Activated CD4-positive, alpha-beta memory T cell treated with anti-CD3 and anti-CD28 coated beads for 36 hours (primary cell): ENCODE measurements at regions of chr6 and their contacts with region 1.

Region 1: GRCh38 chr6:70118670-70119069 is 184.2 kb downstream of the COL9A1 start:
- DNase-seq: no peak
- H3K4me3 Mint-ChIP-seq: no peak overlapping the region
- H3K27ac Mint-ChIP-seq: no peak overlapping the region
- H3K4me1 Mint-ChIP-seq: no peaks in the 10 kb centered on the region
- H3K27me3 Mint-ChIP-seq: peaks cover 9% of the 10 kb centered on the region

Region 2: DNA sequence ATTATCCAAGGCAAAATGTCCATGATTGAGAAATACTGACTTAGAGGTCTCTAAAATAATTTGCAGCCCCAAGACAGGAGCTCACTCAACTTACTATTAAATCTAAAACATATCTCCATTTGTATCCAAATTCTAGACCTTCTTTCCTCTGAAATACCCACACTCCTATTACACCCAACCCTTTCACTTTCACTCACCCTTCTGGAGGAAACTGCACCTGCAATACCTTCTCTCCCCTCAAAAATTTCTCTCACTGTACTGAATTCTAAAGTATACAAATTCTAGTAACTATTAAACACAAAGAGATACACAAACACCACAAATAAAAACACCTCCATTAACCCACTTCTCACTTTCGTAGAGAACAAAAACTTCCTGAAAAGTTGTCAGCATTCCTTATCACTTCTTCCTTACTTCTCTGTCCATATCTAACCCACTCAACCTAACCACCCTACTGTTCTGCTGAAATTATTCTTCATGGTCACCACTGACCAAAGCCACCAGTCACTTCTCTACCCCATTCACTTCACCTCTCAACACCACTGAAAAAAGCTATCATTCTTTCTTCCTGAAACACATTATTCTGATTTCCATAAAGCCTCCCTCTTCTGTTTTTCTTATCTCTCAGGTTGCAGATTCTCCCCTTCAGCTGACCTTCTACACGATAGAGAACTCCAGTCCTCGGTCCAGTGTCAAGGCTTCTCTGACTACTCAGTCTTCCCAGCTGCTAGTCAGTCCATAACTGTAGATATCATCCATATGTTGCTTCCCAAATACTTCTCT is 333.9 kb before region 1 on chr6:
- CTCF ChIA-PET with region 1: no interaction called
- POLR2A ChIA-PET with region 1: no interaction called
- intact Hi-C with region 1: no loop called
- DNase-seq: no peak
- H3K4me3 Mint-ChIP-seq: no peak overlapping the region
- H3K27ac Mint-ChIP-seq: peak overlapping the region; percentile 0
- H3K4me1 Mint-ChIP-seq: peaks cover 48% of the 10 kb centered on the region
- H3K27me3 Mint-ChIP-seq: no peaks in the 10 kb centered on the region

Region 3: GRCh38 chr6:70107852-70108629 is 10.6 kb before region 1 on chr6:
- CTCF ChIA-PET with region 1: interaction called, 15 read pairs
- POLR2A ChIA-PET with region 1: no interaction called
- intact Hi-C with region 1: no loop called
- DNase-seq: no peak
- H3K4me3 Mint-ChIP-seq: no peak overlapping the region
- H3K27ac Mint-ChIP-seq: no peak overlapping the region
- H3K4me1 Mint-ChIP-seq: no peaks in the 10 kb centered on the region
- H3K27me3 Mint-ChIP-seq: peaks cover 9% of the 10 kb centered on the region

Region 4: DNA sequence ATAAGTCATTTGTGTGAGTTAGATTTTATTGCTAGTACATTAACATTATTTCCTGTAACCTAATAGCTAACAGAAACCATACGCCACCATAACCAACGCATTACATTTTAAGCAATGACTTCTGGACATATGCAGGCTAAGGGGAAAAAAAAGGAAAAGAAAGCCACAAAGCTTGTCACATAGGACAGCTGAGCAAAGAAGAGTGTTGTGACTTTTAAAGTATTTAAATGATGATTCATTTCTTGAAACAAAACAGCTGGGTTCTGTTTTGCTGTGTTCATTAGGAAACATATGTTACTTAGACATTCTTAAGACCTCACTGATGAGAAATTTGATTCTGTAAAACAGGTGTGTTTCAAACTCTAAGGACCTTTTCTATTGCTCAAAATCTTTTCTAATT is 12.9 kb after region 1 on chr6:
- CTCF ChIA-PET with region 1: no interaction called
- POLR2A ChIA-PET with region 1: no interaction called
- intact Hi-C with region 1: no loop called
- DNase-seq: no peak
- H3K4me3 Mint-ChIP-seq: no peak overlapping the region
- H3K27ac Mint-ChIP-seq: no peak overlapping the region
- H3K4me1 Mint-ChIP-seq: no peaks in the 10 kb centered on the region
- H3K27me3 Mint-ChIP-seq: no peaks in the 10 kb centered on the region